ENCODE measurements at regions of chr22 and their contacts with region 1.

Region 1: GRCh38 chr22:43993027-43993760 is 30.9 kb upstream of the PARVB start:
- DNase-seq: peak; percentile 85
- CTCF ChIP-seq: peak; percentile 94

Region 2: DNA sequence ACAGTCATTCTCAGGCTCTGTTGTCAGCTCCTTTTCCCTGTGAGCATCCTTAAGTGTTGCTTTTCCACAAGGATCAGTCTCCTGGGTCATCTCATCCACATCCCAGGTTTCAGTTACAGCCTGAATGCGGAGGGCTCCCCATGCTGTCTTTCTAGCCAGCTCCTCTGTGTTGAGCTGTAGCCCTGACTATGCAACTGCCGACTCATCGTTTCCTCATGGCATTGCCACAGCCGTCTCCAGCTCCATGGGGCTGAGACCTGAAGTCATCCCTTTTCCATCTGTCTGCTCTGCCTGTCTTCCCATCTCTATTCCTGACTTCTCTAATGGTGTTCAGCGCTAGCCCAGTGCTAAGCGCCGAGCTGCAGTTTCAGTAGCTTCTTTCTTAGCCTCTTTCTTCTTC is 26.1 kb before region 1 on chr22:
- CTCF ChIA-PET with region 1: interaction called, 18 read pairs
- POLR2A ChIA-PET with region 1: no interaction called
- DNase-seq: no peak
- CTCF ChIP-seq: no peak

Region 3: DNA sequence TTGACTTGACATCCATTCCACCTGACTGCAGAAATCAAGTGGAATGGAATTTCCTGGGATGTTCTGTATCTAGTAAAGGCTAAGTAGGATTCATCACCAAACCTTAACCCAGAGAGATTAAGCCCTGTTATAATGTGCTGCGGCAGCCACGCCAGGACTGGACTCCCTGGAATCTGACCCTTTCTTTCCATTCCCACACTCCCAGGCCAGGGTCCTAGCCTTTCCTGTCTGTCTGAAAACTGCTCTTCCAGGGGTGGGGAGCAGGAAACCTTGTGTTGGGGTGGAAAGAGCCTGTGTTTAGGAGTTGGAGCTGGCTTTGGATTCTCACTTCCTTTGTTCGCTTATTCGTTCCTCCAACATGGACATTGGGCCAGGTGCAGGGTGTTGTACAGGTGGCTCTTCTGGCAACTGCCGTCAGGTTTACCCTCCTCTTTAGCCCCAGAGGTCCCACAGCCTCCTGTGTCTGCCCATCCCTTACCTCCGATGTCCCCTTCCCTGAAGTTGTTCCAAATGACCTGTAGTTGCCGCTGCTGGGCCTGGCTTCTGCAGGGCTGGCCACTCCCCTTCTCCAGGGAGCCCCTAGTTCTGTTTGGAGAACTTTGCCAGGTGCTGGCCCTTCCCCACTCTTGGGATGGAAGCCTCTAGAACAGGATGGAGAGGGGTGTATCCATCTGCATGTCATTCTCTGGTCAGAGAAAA is 10.4 kb after region 1 on chr22:
- CTCF ChIA-PET with region 1: interaction called, 26 read pairs
- POLR2A ChIA-PET with region 1: no interaction called
- DNase-seq: no peak
- CTCF ChIP-seq: no peak

Region 4: GRCh38 chr22:44019846-44020245 is 26.7 kb after region 1 on chr22:
- CTCF ChIA-PET with region 1: interaction called, 34 read pairs
- POLR2A ChIA-PET with region 1: interaction called, 4 read pairs
- DNase-seq: no peak
- CTCF ChIP-seq: no peak

Region 5: DNA sequence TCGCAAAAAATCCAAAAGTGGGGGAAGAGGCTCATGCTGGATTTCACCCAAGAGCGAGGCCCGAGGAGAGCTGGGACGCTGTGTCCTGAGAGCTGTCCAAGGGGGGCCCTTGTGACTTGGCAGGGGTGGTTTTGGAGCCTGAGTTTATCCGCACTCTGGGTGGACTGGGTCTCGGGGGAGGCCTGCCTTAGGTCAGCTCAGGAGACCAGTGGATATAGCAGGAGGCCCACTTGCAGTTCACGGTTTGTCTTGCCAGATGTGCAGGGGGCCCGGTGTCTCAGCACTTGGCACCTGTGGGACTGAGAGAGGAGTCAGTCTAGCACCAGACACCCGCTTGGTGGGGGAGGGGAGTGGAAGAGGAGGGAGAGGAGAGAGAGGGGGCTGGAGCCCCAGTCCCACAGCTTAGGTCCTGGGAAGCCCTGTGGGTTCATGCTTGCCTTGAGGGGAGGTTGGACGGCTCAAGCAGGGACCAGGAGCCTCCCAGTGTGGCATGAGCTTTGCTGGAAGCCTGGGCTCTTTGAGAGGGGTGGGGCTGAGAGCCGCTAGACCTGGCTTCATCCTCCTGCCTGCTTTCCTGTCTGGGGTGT is 64.3 kb after region 1 on chr22:
- CTCF ChIA-PET with region 1: interaction called, 12 read pairs
- POLR2A ChIA-PET with region 1: no interaction called
- DNase-seq: no peak
- CTCF ChIP-seq: no peak

Region 6: GRCh38 chr22:44080936-44081861 is 88.0 kb after region 1 on chr22:
- CTCF ChIA-PET with region 1: interaction called, 328 read pairs
- POLR2A ChIA-PET with region 1: no interaction called
- DNase-seq: peak; percentile 85
- CTCF ChIP-seq: peak; percentile 72

Region 7: DNA sequence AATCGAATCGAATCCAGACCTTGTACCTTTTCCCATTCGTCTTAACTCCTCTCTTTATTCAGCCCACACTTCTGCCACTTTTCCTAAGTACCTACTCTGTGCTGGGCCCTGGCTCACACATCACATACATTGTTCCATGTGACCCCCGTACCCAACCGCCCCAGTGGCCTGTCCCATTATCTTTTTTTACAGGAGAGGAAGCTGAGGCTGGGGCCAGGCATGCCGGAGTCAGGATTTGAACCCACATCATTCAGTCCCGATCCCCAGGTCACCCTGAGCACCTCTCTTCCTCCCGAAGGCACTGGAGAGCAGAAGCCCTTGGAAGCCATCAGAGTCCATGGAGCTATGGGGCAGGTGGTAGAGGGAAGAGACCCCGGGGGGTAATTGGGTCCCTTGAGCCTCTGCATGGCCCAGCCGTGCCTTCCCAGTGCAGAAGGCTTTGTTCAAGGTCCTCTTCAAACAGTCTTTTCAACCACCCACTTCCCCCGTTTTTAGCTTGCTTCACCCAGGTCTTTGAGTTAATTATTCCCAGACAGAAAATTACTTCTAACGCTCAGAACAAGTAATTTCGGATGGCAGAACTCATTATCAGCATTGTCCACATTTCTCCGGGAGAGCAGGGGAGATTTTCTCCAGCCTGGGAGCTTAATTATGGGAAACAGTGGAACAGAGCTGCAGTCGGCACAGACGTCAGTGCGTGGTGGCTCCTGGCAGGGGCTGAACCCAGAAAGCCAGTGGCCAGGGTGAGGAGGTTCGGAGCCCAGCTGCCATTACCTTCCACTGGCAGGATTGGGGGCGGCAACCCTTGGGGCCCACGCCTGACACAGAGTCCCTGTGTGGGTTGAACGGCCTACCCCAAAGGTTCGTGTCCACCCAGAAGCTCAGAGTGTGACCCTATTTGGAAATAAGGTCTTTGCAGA is 587.2 kb after region 1 on chr22:
- CTCF ChIA-PET with region 1: interaction called, 11 read pairs
- POLR2A ChIA-PET with region 1: no interaction called
- DNase-seq: no peak
- CTCF ChIP-seq: no peak